ENCODE measurements at regions of chr17 and their contacts with region 1.

Region 1: DNA sequence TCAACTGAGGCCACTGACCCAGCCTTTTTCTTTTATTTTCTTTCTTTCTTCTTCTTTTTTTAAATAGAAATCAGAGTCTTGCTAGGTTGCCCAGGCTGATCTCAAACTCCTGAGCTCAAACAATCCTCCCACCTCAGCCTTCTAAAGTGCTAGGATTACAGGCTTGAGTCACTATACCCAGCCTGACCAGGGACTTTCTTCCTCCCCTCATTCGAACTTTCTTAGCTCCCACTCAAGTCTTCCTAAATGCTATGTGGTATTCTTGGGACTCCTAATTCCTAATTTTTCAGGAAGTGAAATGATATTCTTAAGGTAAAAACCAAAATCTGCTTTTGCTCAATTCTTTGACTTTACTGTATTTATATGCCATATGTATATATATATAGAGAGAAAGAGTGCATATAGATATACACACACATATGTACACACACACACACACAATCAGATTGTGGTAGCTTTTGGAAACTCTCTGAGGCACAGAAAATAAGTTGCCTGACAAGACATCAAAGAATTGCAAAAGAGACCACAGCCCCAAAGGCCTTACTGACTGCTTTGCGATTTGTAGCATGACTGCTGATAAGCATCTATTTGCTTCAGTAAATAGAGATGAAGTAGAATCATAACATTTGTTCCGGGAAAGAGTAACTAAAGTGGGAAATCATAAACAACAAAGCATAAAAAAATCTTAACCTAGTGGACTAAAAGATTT is 9.5 kb upstream of the AMZ2 start:
- DNase-seq: no peak
- ATAC-seq: peak; percentile 33
- H3K4me3 ChIP-seq: peak overlapping the region; percentile 61
- H3K27ac ChIP-seq: peak overlapping the region; percentile 96
- H3K4me1 ChIP-seq: peaks cover 41% of the 10 kb centered on the region
- H3K27me3 ChIP-seq: no peaks in the 10 kb centered on the region
- CTCF ChIP-seq: no peak
- EP300 ChIP-seq: no peak
- POLR2A ChIP-seq: no peak
- RAD21 ChIP-seq: no peak

Region 2: DNA sequence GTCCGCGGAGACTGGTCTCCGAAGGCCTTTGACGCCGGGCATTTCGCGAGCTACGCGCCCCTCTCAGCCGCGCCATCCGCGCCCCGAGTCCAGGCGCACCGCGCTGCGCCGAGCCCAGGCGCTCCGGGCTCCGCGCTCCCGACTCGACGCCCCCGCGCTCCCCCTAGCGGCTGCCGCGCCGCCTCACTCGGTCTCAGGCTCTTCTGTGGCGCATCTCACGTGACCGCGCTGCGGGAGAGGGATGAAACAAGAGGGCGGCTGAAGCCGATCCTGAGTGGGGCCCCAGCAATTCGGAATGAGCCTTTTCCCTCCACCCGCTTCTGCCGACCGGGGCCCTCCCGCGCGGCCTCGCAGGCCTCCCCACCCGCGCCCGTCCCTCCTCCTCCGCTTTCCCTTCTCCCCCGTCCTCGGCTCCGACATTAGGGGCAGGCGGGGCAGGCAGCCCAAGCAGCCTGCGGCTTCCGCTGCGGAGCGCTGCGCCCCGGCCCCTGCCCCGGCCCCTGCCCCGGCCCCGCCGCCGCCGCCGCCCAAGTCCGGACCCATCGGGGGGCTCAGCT is 33.0 kb before region 1 on chr17:
- CTCF ChIA-PET with region 1: interaction called, 5 read pairs
- POLR2A ChIA-PET with region 1: interaction called, 16 read pairs
- RAD21 ChIA-PET with region 1: interaction called, 17 read pairs
- SMC1A ChIA-PET with region 1: interaction called, 15 read pairs
- in situ Hi-C with region 1: no loop called
- intact Hi-C with region 1: no loop called
- DNase-seq: no peak
- ATAC-seq: peak; percentile 92
- H3K4me3 ChIP-seq: peak overlapping the region; percentile 90
- H3K27ac ChIP-seq: peak overlapping the region; percentile 79
- H3K4me1 ChIP-seq: peaks cover 8% of the 10 kb centered on the region
- H3K27me3 ChIP-seq: 0 out of 4 replicates have a peak, but pooled peaks cover 2 to 4% of the 10 kb centered on the region in 2 experiments
- CTCF ChIP-seq: peak; percentile 85 to 96 (median 92)
- EP300 ChIP-seq: no peak
- POLR2A ChIP-seq: peak; percentile 79
- RAD21 ChIP-seq: peak; percentile 55

Region 3: DNA sequence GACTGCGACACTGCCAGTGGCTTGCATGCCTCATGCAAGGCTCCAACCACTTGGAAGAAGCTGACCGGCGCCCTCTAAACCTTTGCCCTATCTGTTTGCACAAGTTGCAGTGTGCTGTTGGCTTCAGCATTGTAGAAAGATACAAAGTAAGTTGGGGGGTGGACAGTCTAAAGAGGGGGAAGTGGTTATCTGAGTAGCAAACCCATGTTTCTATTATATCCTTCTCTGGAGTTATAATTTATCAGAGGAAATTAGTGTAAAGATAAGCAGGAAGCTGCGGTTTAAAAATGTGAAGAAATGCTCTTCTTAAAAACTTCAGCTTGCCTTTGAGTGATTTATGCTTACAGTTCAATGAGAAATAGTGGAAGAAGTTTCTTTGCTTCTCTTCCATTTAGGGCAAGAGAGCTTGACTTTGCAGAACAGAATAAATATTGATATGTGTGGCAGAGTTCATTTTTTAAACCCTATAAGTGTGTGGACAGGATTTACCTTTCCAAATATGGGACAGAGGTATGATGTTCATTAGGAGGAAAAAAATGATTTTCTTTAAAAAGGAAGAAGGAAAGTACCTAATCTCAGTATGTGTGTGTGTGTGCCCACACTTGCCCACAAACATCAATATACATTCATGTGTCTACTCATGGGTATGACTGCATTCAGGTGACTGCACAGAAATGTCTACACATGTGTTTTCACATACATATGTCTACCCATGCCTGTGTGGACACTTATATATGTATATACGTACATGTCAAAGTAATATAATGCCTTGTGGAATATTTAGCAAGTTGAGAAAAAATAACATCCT is 17.6 kb after region 1 on chr17:
- CTCF ChIA-PET with region 1: interaction called, 5 read pairs
- POLR2A ChIA-PET with region 1: interaction called, 6 read pairs
- RAD21 ChIA-PET with region 1: interaction called, 13 read pairs
- SMC1A ChIA-PET with region 1: interaction called, 18 read pairs
- in situ Hi-C with region 1: no loop called
- intact Hi-C with region 1: no loop called
- DNase-seq: no peak
- ATAC-seq: peak; percentile 57
- H3K4me3 ChIP-seq: no peak overlapping the region
- H3K27ac ChIP-seq: no peak overlapping the region
- H3K4me1 ChIP-seq: peaks cover 7% of the 10 kb centered on the region; the same call in 1 of the 2 replicates
- H3K27me3 ChIP-seq: no peaks in the 10 kb centered on the region
- CTCF ChIP-seq: no peak
- EP300 ChIP-seq: no peak
- POLR2A ChIP-seq: no peak
- RAD21 ChIP-seq: no peak

Region 4: GRCh38 chr17:68443972-68444459 is 205.7 kb after region 1 on chr17:
- CTCF ChIA-PET with region 1: no interaction called
- POLR2A ChIA-PET with region 1: interaction called, 12 read pairs
- RAD21 ChIA-PET with region 1: no interaction called
- SMC1A ChIA-PET with region 1: no interaction called
- in situ Hi-C with region 1: no loop called
- intact Hi-C with region 1: no loop called
- DNase-seq: no peak
- ATAC-seq: no peak
- H3K4me3 ChIP-seq: no peak overlapping the region
- H3K27ac ChIP-seq: no peak overlapping the region
- H3K4me1 ChIP-seq: peaks cover 9% of the 10 kb centered on the region
- H3K27me3 ChIP-seq: no peaks in the 10 kb centered on the region
- CTCF ChIP-seq: no peak
- EP300 ChIP-seq: no peak
- POLR2A ChIP-seq: no peak
- RAD21 ChIP-seq: no peak

Measured in GM12878 (cell line).